ENCODE measurements at regions of chr1 and their contacts with region 1.

Region 1: GRCh38 chr1:16217061-16217785 is 4.8 kb upstream of the ARHGEF19 start:
- DNase-seq: peak; percentile 98
- H3K4me3 Mint-ChIP-seq: peak overlapping the region; percentile 88
- H3K27ac Mint-ChIP-seq: peak overlapping the region; percentile 39
- H3K4me1 Mint-ChIP-seq: peaks cover 24% of the 10 kb centered on the region
- H3K27me3 Mint-ChIP-seq: peaks cover 14% of the 10 kb centered on the region

Region 2: GRCh38 chr1:16236511-16237342 is 19.5 kb after region 1 on chr1 and contains the start of gene CPLANE2:
- intact Hi-C with region 1: loop called (anchors 1 kb)
- DNase-seq: peak; percentile 99
- H3K4me3 Mint-ChIP-seq: peak within 1 kb of the TSS; percentile 91
- H3K27ac Mint-ChIP-seq: peak within 1 kb of the TSS; percentile 92
- H3K4me1 Mint-ChIP-seq: peaks cover 20% of the 10 kb centered on the region
- H3K27me3 Mint-ChIP-seq: no peaks in the 10 kb centered on the region
- total RNA-seq, gene CPLANE2: 4.8 and 6.1 TPM in 2 replicates

Region 3: GRCh38 chr1:16307222-16307621 is 90.0 kb after region 1 on chr1:
- intact Hi-C with region 1: no loop called
- DNase-seq: no peak
- H3K4me3 Mint-ChIP-seq: no peak overlapping the region
- H3K27ac Mint-ChIP-seq: no peak overlapping the region
- H3K4me1 Mint-ChIP-seq: no peaks in the 10 kb centered on the region
- H3K27me3 Mint-ChIP-seq: no peaks in the 10 kb centered on the region